Mammary epithelial cell (primary cell): ENCODE measurements at regions of chr7 and their contacts with region 1.

Region 1: GRCh38 chr7:33895025-33895804 is 10.1 kb upstream of the BMPER start:
- DNase-seq: peak; percentile 77
- H3K4me3 ChIP-seq: no peak overlapping the region
- H3K27ac ChIP-seq: no peak overlapping the region
- H3K4me1 ChIP-seq: peaks cover 5% of the 10 kb centered on the region
- H3K27me3 ChIP-seq: no peaks in the 10 kb centered on the region
- CTCF ChIP-seq: peak; percentile 88 to 93

Region 2: DNA sequence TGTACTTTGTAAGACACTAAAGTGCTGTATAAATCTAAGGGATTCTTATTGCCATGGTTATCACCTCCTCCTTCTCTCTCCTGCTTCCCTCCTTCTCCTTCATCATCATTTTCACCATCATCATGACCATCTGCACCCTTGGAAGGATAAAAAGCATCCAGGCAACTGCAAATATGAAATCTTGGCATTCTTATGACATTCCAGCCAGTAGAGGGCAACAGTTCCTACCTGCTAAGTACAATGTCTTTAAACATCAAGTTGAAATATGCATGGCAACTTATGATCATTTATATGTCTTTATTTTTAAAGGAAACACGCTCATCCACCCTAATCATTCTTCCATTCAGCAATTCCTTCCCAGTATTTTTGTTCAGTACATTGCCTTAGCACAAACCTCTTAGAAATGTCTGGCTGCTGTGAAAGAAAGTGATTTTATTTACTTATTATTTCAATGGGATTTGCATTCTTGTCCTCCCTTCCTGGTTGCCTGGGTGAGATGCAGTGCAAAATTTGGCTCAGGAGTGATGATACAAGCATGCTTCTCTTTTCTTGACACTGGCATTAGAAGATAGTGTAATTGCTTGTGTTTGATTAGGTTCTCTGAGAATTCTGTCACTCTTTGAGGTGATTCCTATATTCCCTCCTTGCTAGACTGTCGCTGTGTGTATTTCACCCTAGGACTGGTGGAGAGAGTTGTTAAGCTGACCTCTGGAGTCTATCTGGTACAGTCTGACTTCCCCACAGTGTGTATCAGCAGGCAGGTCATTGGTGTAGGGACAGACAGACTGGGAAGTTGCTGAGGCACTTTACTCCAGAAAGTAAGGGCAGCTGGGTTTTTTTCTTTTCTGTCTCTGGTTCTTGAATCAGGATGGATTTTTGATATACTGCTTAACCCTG is 178.4 kb before region 1 on chr7:
- CTCF ChIA-PET with region 1: no interaction called
- dilution Hi-C with region 1: no loop called
- in situ Hi-C with region 1: no loop called
- intact Hi-C with region 1: loop called (anchors 2 kb)
- DNase-seq: peak; percentile 37
- H3K4me3 ChIP-seq: no peak overlapping the region
- H3K27ac ChIP-seq: no peak overlapping the region
- H3K4me1 ChIP-seq: peaks cover under 1% of the 10 kb centered on the region
- H3K27me3 ChIP-seq: peaks cover 3% of the 10 kb centered on the region
- CTCF ChIP-seq: peak; percentile 57 to 77

Region 3: GRCh38 chr7:33757562-33758165 is 137.6 kb before region 1 on chr7:
- CTCF ChIA-PET with region 1: no interaction called
- dilution Hi-C with region 1: no loop called
- in situ Hi-C with region 1: no loop called
- intact Hi-C with region 1: loop called (anchors 1 kb)
- DNase-seq: peak; percentile 10
- H3K4me3 ChIP-seq: no peak overlapping the region
- H3K27ac ChIP-seq: no peak overlapping the region
- H3K4me1 ChIP-seq: no peaks in the 10 kb centered on the region
- H3K27me3 ChIP-seq: no peaks in the 10 kb centered on the region
- CTCF ChIP-seq: peak; percentile 57 to 58

Region 4: GRCh38 chr7:33807779-33808482 is 87.3 kb before region 1 on chr7:
- CTCF ChIA-PET with region 1: interaction called, 11 read pairs
- dilution Hi-C with region 1: no loop called
- in situ Hi-C with region 1: no loop called
- intact Hi-C with region 1: loop called (anchors 1 kb)
- DNase-seq: peak; percentile 95
- H3K4me3 ChIP-seq: no peak overlapping the region
- H3K27ac ChIP-seq: peak overlapping the region; percentile 99
- H3K4me1 ChIP-seq: peaks cover 28% of the 10 kb centered on the region
- H3K27me3 ChIP-seq: no peaks in the 10 kb centered on the region
- CTCF ChIP-seq: peak; percentile 93 to 94

Region 5: GRCh38 chr7:33921216-33921938 is 26.2 kb after region 1 on chr7:
- CTCF ChIA-PET with region 1: no interaction called
- dilution Hi-C with region 1: no loop called
- in situ Hi-C with region 1: no loop called
- intact Hi-C with region 1: no loop called
- DNase-seq: no peak
- H3K4me3 ChIP-seq: no peak overlapping the region
- H3K27ac ChIP-seq: no peak overlapping the region
- H3K4me1 ChIP-seq: peaks cover 2% of the 10 kb centered on the region
- H3K27me3 ChIP-seq: peaks cover 1% of the 10 kb centered on the region
- CTCF ChIP-seq: no peak